ENCODE measurements at regions of chr1 and their contacts with region 1.

Region 1: GRCh38 chr1:39142401-39143151 is 61.9 kb upstream of the MACF1 start:
- DNase-seq: no peak
- ATAC-seq: no peak
- H3K4me3 ChIP-seq: no peak overlapping the region
- H3K27ac ChIP-seq: no peak overlapping the region
- H3K4me1 ChIP-seq: peaks cover 20 to 41% of the 10 kb centered on the region in 2 donors
- H3K27me3 ChIP-seq: no peaks in the 10 kb centered on the region
- CTCF ChIP-seq: no peak
- POLR2A ChIP-seq: no peak

Region 2: DNA sequence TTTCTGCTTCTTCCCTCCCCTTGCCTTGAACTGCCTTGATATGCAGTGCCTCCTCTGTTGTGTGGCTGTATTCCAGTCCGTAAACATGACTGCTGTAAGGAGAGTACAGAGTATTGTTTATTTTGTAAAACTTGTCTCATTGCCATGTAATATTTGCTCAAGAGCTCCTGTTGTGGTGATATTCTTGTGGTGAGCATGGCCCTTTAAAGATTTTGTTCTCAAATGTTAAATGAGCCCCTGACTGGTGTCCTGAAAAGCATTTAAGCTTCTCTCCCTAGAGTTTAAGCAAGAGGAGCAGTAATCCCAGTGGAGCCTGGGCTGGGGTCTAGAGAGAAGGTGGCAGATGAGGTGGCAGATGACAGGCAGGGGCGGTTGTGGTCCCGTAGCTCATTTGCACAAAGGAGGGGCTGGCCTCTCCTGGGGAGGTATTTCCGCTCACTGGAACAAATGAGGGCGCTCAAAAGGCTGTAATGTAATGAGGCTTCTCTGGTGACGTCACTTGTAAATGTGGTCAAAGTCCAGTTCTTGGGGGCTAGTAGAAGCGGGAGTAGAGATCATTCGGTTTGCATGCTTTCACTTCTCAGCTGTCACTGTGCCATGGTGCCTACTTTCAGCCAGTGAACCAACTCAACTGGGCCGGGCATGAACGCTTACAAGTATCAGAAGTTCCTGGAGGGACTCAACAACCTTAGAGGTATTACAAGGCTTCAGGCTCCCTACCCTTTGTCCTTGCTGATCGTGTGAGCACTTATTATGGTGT is 15.9 kb after region 1 on chr1:
- in situ Hi-C with region 1: no loop called
- intact Hi-C with region 1: loop called (anchors 2 kb)
- DNase-seq: peak in 1 of 2 donors; percentile 22
- ATAC-seq: peak in 1 of 2 donors; percentile 38
- H3K4me3 ChIP-seq: peak overlapping the region in 3 of 4 donors; percentile 1 to 40 (median 6)
- H3K27ac ChIP-seq: peak overlapping the region in 2 of 4 donors; percentile 51 to 73
- H3K4me1 ChIP-seq: peaks cover 55 to 56% of the 10 kb centered on the region in 2 donors
- H3K27me3 ChIP-seq: no peaks in the 10 kb centered on the region
- CTCF ChIP-seq: no peak
- POLR2A ChIP-seq: no peak

Region 3: DNA sequence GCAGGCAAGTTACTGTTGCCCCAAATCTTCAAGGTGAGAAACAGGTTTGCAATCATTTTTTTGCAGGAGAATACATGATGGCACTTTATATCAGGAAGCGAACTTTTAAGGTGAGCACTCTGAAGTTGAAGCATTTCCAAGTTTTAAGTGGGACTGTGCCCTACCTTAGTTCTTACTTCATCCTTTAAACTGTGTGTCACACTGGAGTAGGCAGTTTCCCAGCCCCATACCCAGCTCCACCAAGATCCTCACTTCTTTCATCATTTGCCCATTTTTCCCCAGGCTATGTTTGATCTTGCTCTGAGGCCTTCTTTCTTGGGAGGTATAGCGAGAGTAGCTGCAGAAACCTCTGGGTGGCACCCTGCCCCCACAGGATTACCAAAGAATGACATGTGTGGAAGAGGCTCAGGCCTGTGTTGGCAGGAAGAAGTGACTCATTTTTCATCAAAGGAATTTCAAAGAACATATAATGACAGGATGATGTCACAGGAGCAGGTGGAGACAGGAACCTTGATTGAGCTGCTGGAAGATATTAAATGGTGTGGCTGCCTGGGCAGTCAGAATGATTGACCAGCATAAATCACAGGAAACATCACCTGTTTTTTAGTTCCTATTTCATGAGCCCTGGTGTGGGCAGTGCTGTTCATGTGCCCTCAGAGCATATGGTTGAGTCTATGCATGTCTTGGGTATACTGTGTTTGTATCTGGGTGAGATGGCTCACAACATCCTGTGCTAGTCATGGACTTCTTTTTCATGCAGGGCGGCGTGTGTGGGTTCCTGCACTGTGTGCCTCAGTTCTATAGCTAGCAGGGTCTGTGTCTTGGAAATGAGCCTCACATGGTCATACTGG is 41.2 kb after region 1 on chr1:
- in situ Hi-C with region 1: no loop called
- intact Hi-C with region 1: no loop called
- DNase-seq: peak; percentile 65 to 82
- ATAC-seq: peak; percentile 95 to 96
- H3K4me3 ChIP-seq: no peak overlapping the region
- H3K27ac ChIP-seq: peak overlapping the region; percentile 80 to 91 (median 83)
- H3K4me1 ChIP-seq: peaks cover 33 to 35% of the 10 kb centered on the region in 2 donors
- H3K27me3 ChIP-seq: no peaks in the 10 kb centered on the region
- CTCF ChIP-seq: peak; percentile 36 to 63 (median 58)
- POLR2A ChIP-seq: peak in 1 of 2 donors; percentile 40

Region 4: DNA sequence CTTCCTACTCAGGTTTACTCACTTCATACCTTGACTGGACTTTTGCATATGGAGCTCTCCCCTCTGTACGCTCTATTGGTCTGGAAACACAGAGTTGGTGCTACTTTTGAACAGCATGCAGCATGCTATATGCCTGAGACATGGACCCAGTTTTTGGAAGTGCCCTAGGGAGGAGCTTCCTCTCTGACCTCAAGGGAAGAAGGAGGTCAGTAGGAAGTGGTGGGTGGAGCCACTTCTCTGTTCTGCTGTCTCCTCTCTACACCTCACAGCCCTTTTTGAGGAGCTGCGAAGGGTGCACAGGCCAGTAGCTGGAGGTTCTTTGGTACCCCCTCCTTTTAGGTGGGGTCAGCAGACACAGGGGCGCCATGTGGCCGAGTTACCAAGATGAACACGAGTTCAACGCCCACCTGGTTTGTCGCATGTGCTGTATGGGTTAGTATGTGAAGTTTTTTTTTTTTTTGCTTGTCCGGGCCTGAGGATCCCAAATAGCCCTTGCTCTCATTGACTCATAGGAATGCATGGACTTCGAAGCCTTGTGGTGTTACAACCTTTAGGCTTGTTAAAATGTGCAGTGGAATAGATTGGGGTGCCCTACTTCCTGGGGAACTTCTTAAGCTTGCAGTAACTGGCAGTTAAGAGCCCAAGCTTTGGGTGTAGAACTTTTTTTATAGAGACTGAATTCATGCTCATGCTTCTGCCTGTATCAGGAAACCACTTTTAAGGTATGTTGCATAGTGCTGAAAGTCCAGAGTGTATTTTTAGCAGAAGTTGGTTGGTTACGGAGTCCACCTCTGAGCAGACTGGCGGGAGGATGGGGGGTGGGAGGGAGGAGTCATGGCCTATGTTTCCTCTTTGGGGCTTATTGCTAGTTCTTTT is 72.7 kb after region 1 on chr1:
- in situ Hi-C with region 1: no loop called
- intact Hi-C with region 1: no loop called
- DNase-seq: no peak
- ATAC-seq: no peak
- H3K4me3 ChIP-seq: peak overlapping the region in 1 of 4 donors; percentile 3
- H3K27ac ChIP-seq: peak overlapping the region in 2 of 4 donors; percentile 18 to 47
- H3K4me1 ChIP-seq: peaks cover 30 to 38% of the 10 kb centered on the region in 2 donors
- H3K27me3 ChIP-seq: no peaks in the 10 kb centered on the region
- CTCF ChIP-seq: no peak
- POLR2A ChIP-seq: no peak

Region 5: DNA sequence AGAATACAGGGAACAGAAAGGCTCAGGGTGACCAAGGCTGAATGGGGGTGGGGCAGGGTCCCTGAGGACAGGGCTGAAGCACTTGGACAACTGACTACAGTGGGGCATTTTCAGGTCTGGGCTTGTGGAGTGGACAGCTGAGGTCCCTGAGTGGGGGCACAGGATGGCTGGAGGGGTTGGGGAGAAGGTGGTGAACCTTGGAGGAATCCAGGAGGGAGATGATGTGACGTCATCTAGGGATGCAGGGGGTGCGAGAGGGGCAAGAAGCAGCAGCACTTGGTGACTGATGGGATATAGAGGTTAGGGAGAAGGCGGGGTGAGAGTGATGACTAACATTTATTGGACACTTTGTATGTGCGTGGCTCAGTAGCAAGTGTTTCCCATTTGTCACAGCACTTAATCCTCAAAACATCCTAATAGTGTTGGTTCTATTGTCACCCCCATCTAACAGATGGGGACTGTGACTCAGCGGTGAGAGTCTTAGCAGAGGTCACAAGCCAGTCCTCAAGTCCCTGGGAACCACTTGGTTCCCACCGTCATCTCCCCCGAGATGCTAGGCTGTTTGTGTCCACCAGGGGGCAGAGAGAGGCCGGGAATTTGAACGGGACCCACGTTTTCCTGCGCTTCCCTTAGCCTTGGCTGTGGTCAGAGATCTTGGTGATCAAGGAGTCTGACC is 674.0 kb after region 1 on chr1:
- in situ Hi-C with region 1: no loop called
- intact Hi-C with region 1: no loop called
- DNase-seq: peak; percentile 30 to 59
- ATAC-seq: peak; percentile 83 to 85
- H3K4me3 ChIP-seq: no peak overlapping the region
- H3K27ac ChIP-seq: no peak overlapping the region
- H3K4me1 ChIP-seq: no peaks in the 10 kb centered on the region
- H3K27me3 ChIP-seq: peaks cover 0 to 3% (median 0%) of the 10 kb centered on the region in 3 donors
- CTCF ChIP-seq: peak; percentile 76 to 94 (median 87)
- POLR2A ChIP-seq: no peak

Measured in gastrocnemius medialis (tissue), 4 donors.